A673 (cell line): ENCODE measurements at regions of chr2 and their contacts with region 1.

Region 1: DNA sequence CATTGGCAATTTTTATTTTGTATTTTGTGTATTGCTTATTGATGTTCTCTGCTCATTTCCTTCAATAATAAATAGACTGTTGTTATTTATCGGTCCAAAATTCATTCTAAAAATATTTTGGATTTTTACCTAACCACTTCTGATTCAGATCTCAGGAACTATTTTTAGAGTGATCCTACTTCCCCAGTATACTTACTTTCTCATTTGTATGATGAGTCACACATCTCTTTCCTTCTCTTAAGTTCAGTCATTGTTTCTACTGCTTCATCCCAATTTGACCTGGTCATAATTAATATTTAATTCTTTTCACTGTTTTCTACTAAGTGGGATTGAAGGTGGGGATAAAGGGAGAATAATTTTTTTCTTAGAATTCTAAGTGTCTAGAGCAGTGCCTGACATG is 75.1 kb downstream of the AGPS start:
- DNase-seq: no peak
- H3K4me3 ChIP-seq: no peak overlapping the region
- H3K27ac ChIP-seq: no peak overlapping the region
- H3K4me1 ChIP-seq: no peaks in the 10 kb centered on the region
- H3K27me3 ChIP-seq: no peaks in the 10 kb centered on the region
- CTCF ChIP-seq: no peak

Region 2: GRCh38 chr2:177325270-177325929 is 142.2 kb before region 1 on chr2:
- CTCF ChIA-PET with region 1: no interaction called
- POLR2A ChIA-PET with region 1: no interaction called
- intact Hi-C with region 1: no loop called
- DNase-seq: no peak
- H3K4me3 ChIP-seq: no peak overlapping the region
- H3K27ac ChIP-seq: no peak overlapping the region
- H3K4me1 ChIP-seq: peaks cover 6% of the 10 kb centered on the region
- H3K27me3 ChIP-seq: no peaks in the 10 kb centered on the region
- CTCF ChIP-seq: no peak

Region 3: GRCh38 chr2:177455187-177455586 is 12.5 kb before region 1 on chr2:
- CTCF ChIA-PET with region 1: no interaction called
- POLR2A ChIA-PET with region 1: interaction called, 10 read pairs
- intact Hi-C with region 1: no loop called
- DNase-seq: no peak
- H3K4me3 ChIP-seq: no peak overlapping the region
- H3K27ac ChIP-seq: no peak overlapping the region
- H3K4me1 ChIP-seq: no peaks in the 10 kb centered on the region
- H3K27me3 ChIP-seq: no peaks in the 10 kb centered on the region
- CTCF ChIP-seq: no peak

Region 4: DNA sequence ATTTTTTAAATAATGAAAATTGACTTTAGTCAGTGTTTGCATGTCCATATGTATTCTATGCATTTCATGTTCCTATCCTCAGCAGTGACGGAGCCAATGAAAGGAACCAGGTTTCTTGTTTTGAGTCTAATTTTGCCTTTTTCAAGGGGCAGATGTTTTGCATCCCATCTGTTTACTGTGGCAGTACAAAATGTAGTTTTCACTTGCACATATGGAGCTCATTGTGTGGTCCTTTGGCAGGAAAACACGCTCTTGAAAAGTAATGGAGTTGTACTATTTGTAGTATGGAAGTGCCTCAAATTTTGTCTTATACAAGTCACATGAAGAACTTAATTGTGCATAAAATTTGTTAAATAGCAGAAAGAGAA is 52.7 kb after region 1 on chr2:
- CTCF ChIA-PET with region 1: no interaction called
- POLR2A ChIA-PET with region 1: no interaction called
- intact Hi-C with region 1: no loop called
- DNase-seq: no peak
- H3K4me3 ChIP-seq: no peak overlapping the region
- H3K27ac ChIP-seq: no peak overlapping the region
- H3K4me1 ChIP-seq: peaks cover 5% of the 10 kb centered on the region
- H3K27me3 ChIP-seq: no peaks in the 10 kb centered on the region
- CTCF ChIP-seq: no peak